ENCODE measurements at regions of chr12 and their contacts with region 1.

Region 1: DNA sequence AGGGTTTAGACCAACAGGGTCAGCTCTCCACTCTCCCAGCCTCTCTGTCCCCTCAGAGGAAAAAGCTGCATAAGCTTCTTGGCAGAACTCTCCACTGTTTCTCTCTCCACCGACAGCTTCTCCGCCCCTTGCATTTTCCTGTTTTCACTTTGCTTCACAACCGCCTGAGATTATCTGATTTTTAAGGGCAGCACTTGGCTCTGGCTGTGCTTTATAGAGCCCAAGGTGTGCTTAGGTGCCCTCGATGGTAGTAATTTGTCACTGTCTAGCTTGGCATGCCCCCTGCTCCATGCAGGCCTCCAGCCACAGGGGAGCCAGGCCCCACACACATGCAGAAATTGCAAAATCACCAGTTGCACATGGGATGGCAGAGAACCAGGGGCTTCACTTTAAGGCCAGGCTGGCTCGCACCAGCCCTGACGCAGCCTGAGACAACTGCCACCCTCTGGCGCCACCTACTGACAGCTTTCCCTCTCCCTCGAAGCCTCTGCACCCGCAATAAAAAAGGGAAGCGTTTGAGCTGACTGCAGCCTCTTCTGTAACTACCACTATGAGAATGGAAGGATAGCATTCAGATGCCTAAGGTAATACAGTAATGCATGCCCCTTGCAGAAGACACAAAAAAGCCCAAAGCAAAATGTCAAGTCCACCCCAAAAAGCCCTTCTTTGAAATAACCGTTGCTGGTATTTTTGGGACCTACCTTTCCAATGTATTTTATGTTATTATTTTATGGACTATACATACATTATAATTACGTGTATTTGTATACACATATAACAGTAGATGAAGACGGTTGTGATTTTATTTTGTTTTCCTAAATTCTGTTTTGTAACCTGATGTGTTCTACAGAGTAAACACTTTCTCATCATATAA is 32.0 kb upstream of the RIMBP2 start:
- DNase-seq: peak; percentile 40
- ATAC-seq: peak; percentile 98
- H3K4me3 ChIP-seq: no peak overlapping the region
- H3K27ac ChIP-seq: no peak overlapping the region
- H3K4me1 ChIP-seq: no peaks in the 10 kb centered on the region
- H3K27me3 ChIP-seq: peaks cover 16% of the 10 kb centered on the region
- CTCF ChIP-seq: peak; percentile 64 to 88 (median 84)
- POLR2A ChIP-seq: no peak
- RAD21 ChIP-seq: peak; percentile 86

Region 2: GRCh38 chr12:130026608-130027176 is 721.4 kb before region 1 on chr12:
- CTCF ChIA-PET with region 1: no interaction called
- POLR2A ChIA-PET with region 1: no interaction called
- RAD21 ChIA-PET with region 1: no interaction called
- intact Hi-C with region 1: loop called (anchors 1 kb)
- DNase-seq: no peak
- ATAC-seq: no peak
- H3K4me3 ChIP-seq: no peak overlapping the region
- H3K27ac ChIP-seq: no peak overlapping the region
- H3K4me1 ChIP-seq: no peaks in the 10 kb centered on the region
- H3K27me3 ChIP-seq: no peaks in the 10 kb centered on the region
- CTCF ChIP-seq: peak in 2 of 3 experiments; percentile 56 to 58; a peak in 4 of 6 replicates
- POLR2A ChIP-seq: no peak
- RAD21 ChIP-seq: peak; percentile 28; the same call in 1 of the 2 replicates

Region 3: DNA sequence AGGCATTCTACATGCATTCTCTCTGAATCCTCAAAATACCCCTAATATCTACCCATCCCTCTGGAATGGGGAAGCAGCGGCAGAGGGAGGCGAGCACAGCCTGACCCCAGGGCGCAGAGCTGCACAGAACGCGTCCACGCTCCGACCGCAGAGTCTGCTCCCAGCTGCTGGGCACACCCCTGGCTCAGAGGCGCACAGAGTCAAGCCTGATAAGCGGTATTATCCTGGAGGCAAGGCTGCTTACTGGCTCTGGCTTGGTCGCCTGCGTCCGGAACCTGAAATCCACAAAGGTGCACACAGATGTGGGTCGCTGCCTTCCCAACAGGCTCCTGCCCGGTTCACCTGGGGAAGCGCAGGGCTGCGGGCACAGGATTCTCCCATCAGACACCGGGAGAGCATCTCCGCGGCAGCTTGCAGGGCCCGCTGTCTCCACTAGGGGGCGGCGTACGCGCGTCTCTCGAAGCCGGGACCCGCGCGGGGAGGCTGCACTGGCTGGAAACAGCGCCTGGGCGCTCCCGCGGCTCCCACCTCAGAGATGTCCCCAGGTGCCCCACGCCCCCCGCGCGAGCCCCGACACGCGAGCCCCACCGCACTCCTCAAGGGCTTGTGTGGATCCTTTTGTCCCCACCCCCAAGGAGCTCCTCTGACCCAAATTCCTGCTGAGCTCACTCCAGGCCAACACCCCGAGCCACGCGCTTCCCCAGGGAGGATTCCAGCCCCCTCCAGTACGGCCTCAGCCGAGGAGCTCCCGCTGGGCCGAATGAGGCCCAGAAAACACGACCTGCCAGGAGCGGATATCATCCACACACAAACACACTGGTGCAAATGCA is 705.9 kb before region 1 on chr12:
- CTCF ChIA-PET with region 1: no interaction called
- POLR2A ChIA-PET with region 1: no interaction called
- RAD21 ChIA-PET with region 1: no interaction called
- intact Hi-C with region 1: loop called (anchors 2 kb)
- DNase-seq: no peak
- ATAC-seq: no peak
- H3K4me3 ChIP-seq: no peak overlapping the region
- H3K27ac ChIP-seq: no peak overlapping the region
- H3K4me1 ChIP-seq: no peaks in the 10 kb centered on the region
- H3K27me3 ChIP-seq: no peaks in the 10 kb centered on the region
- CTCF ChIP-seq: peak in 2 of 3 experiments; percentile 28; a peak in 4 of 6 replicates
- POLR2A ChIP-seq: no peak
- RAD21 ChIP-seq: no peak

Region 4: GRCh38 chr12:130281153-130281799 is 466.8 kb before region 1 on chr12:
- CTCF ChIA-PET with region 1: no interaction called
- POLR2A ChIA-PET with region 1: no interaction called
- RAD21 ChIA-PET with region 1: no interaction called
- intact Hi-C with region 1: loop called (anchors 10 kb)
- DNase-seq: no peak
- ATAC-seq: peak; percentile 72
- H3K4me3 ChIP-seq: no peak overlapping the region
- H3K27ac ChIP-seq: no peak overlapping the region
- H3K4me1 ChIP-seq: no peaks in the 10 kb centered on the region
- H3K27me3 ChIP-seq: no peaks in the 10 kb centered on the region
- CTCF ChIP-seq: peak in 2 of 3 experiments; percentile 71 to 79; a peak in 4 of 6 replicates
- POLR2A ChIP-seq: no peak
- RAD21 ChIP-seq: peak; percentile 27; the same call in 1 of the 2 replicates

Region 5: GRCh38 chr12:130401703-130402102 is 346.4 kb before region 1 on chr12:
- CTCF ChIA-PET with region 1: no interaction called
- POLR2A ChIA-PET with region 1: no interaction called
- RAD21 ChIA-PET with region 1: no interaction called
- intact Hi-C with region 1: loop called (anchors 2 kb)
- DNase-seq: no peak
- ATAC-seq: peak; percentile 40; the same call in 1 of the 2 replicates
- H3K4me3 ChIP-seq: no peak overlapping the region
- H3K27ac ChIP-seq: no peak overlapping the region
- H3K4me1 ChIP-seq: no peaks in the 10 kb centered on the region
- H3K27me3 ChIP-seq: no peaks in the 10 kb centered on the region; the same call in 1 of the 2 replicates
- CTCF ChIP-seq: peak in 1 of 3 experiments; percentile 14; a peak in 1 of 6 replicates
- POLR2A ChIP-seq: no peak
- RAD21 ChIP-seq: peak; percentile 23; the same call in 1 of the 2 replicates

Region 6: DNA sequence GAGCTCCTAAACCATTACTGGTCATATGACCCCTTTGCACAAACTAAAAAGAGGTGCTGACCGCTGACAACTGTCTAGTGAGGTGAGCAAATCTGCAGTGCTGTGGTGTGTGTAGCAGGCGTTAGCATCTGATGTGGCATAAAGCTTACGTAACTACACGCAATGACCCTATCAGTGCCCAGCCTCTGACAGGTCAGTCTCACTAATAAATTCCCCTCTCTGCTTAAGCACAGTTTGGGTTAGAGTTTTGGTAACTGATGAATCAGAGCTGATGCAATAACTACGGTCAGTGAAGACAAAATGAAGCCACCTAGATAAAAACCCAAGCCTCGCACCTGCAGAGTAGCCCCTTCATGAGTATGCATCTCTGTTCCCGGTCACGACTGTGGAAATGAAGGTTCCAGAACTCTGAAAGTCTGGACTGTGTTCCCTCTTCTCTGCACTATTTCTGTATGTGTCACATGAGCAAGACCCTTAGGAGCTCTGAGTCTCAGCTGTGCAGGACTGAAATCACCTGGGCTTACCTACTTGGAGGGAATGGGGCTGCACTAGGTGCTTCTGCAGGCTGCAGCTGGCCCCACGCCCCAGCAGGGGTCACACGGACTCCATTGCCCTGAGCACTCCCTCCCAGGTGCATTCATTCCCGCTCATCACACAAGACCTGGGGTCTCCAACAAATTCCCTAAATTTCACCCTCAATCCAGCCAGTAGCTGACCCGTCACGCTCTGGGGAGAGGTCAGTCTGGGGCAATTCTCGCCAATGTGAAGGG is 86.4 kb before region 1 on chr12:
- CTCF ChIA-PET with region 1: interaction called, 4 read pairs
- POLR2A ChIA-PET with region 1: no interaction called
- RAD21 ChIA-PET with region 1: no interaction called
- intact Hi-C with region 1: loop called (anchors 5 kb)
- DNase-seq: peak; percentile 2
- ATAC-seq: no peak; the same call in 1 of the 2 replicates
- H3K4me3 ChIP-seq: no peak overlapping the region
- H3K27ac ChIP-seq: no peak overlapping the region
- H3K4me1 ChIP-seq: no peaks in the 10 kb centered on the region
- H3K27me3 ChIP-seq: no peaks in the 10 kb centered on the region
- CTCF ChIP-seq: peak in 1 of 3 experiments; percentile 27; a peak in 1 of 6 replicates
- POLR2A ChIP-seq: no peak
- RAD21 ChIP-seq: 0 out of 2 replicates have a peak, but pooled peaks have one; percentile 19

Region 7: DNA sequence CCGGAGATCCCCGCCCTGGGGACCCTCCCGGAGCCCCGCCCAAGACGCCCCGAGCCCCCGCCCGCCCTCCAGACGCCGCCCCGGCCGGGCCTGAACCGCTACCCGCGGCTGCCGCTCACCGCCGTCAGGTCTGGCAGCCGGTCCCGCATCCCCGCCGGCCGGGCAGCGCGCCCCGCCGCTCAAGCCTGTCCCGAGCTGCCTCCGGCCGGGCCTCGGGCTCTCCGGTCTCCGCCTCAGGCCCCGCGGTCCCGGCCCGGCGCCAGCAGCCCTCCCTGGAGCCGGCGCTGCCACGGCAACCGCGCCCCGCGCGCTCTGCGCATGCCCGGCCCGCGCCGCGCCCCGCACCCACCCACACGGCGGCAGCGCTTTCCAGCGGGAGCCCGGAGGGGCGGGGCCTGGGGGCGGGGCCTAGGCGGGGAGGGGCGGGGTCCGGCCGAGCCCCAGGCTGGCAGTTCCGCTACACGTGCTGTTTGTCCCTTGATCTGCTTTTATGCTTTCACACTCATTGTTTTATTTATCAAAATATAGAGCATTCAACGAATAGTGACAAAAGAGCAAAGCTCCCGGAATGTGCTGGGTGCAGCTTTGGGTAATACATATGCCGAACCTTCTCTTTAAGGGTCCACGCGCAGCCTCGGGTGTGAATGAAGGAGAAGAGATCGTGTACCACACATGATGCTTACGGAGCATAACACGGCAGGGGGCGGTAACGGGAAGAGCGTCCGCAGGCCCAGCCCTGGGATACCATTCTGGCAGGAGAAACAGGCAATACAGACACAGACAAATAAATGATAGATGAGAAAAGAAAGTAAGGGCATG is 91.1 kb after region 1 on chr12 and contains the start of gene STX2:
- CTCF ChIA-PET with region 1: no interaction called
- POLR2A ChIA-PET with region 1: no interaction called
- RAD21 ChIA-PET with region 1: no interaction called
- intact Hi-C with region 1: no loop called
- DNase-seq: peak; percentile 54
- ATAC-seq: peak; percentile 90
- H3K4me3 ChIP-seq: peak within 1 kb of the TSS; percentile 64 to 77
- H3K27ac ChIP-seq: peak within 1 kb of the TSS; percentile 42
- H3K4me1 ChIP-seq: peaks cover 12 to 20% of the 10 kb centered on the region in 2 experiments; a peak in 3 of 4 replicates
- H3K27me3 ChIP-seq: no peaks in the 10 kb centered on the region
- CTCF ChIP-seq: peak in 2 of 3 experiments; percentile 13 to 17; a peak in 2 of 6 replicates
- POLR2A ChIP-seq: peak; percentile 45
- RAD21 ChIP-seq: peak; percentile 29; the same call in 1 of the 2 replicates
- total RNA-seq, gene STX2: 19.2 TPM

Region 8: GRCh38 chr12:131896080-131896810 is 1148.1 kb after region 1 on chr12:
- CTCF ChIA-PET with region 1: no interaction called
- POLR2A ChIA-PET with region 1: no interaction called
- RAD21 ChIA-PET with region 1: no interaction called
- intact Hi-C with region 1: no loop called
- DNase-seq: peak; percentile 70
- ATAC-seq: peak; percentile 85
- H3K4me3 ChIP-seq: peak overlapping the region; percentile 55 to 61
- H3K27ac ChIP-seq: peak overlapping the region; percentile 76
- H3K4me1 ChIP-seq: peaks cover 21 to 33% of the 10 kb centered on the region in 2 experiments
- H3K27me3 ChIP-seq: no peaks in the 10 kb centered on the region
- CTCF ChIP-seq: no peak
- POLR2A ChIP-seq: peak; percentile 20
- RAD21 ChIP-seq: no peak

Measured in HCT116 (cell line).